ENCODE measurements at regions of chr4 and their contacts with region 1.

Region 1: GRCh38 chr4:73729534-73730165 is 10.7 kb upstream of the CXCL8 start:
- DNase-seq: peak; percentile 16 to 51
- H3K4me3 ChIP-seq: no peak overlapping the region
- H3K27ac ChIP-seq: no peak overlapping the region
- H3K4me1 ChIP-seq: peaks cover 24% of the 10 kb centered on the region
- H3K27me3 ChIP-seq: no peaks in the 10 kb centered on the region
- CTCF ChIP-seq: peak; percentile 72

Region 2: GRCh38 chr4:73662709-73663546 is 66.7 kb before region 1 on chr4:
- CTCF ChIA-PET with region 1: no interaction called
- POLR2A ChIA-PET with region 1: no interaction called
- intact Hi-C with region 1: loop called (anchors 2 kb)
- DNase-seq: no peak
- H3K4me3 ChIP-seq: no peak overlapping the region
- H3K27ac ChIP-seq: no peak overlapping the region
- H3K4me1 ChIP-seq: no peaks in the 10 kb centered on the region
- H3K27me3 ChIP-seq: no peaks in the 10 kb centered on the region
- CTCF ChIP-seq: peak; percentile 72

Region 3: DNA sequence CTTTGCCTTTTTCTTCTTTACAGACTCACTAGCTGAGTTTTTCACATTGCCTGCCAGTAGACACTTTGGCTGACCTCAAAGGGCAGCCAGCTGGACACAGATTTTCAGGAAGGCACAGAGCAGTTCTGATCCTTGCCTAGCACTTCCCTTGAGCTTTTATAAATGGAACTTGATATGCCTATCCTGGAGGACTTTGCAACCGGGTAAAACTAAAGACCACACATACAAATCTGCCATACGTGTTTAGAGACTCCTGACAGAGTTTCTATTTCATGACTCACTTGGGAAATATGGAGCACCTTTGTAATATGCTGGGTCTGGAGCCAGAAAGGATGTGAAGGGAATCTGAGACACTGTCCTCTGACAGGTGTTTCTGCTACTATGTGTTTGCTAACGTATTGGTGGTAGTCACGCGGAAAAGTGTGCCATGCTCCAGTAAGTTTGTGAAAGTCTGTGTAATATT is 52.8 kb before region 1 on chr4:
- CTCF ChIA-PET with region 1: no interaction called
- POLR2A ChIA-PET with region 1: no interaction called
- intact Hi-C with region 1: loop called (anchors 1 kb)
- DNase-seq: peak; percentile 38 to 95
- H3K4me3 ChIP-seq: no peak overlapping the region
- H3K27ac ChIP-seq: peak overlapping the region; percentile 94
- H3K4me1 ChIP-seq: peaks cover 24% of the 10 kb centered on the region
- H3K27me3 ChIP-seq: no peaks in the 10 kb centered on the region
- CTCF ChIP-seq: no peak

Region 4: DNA sequence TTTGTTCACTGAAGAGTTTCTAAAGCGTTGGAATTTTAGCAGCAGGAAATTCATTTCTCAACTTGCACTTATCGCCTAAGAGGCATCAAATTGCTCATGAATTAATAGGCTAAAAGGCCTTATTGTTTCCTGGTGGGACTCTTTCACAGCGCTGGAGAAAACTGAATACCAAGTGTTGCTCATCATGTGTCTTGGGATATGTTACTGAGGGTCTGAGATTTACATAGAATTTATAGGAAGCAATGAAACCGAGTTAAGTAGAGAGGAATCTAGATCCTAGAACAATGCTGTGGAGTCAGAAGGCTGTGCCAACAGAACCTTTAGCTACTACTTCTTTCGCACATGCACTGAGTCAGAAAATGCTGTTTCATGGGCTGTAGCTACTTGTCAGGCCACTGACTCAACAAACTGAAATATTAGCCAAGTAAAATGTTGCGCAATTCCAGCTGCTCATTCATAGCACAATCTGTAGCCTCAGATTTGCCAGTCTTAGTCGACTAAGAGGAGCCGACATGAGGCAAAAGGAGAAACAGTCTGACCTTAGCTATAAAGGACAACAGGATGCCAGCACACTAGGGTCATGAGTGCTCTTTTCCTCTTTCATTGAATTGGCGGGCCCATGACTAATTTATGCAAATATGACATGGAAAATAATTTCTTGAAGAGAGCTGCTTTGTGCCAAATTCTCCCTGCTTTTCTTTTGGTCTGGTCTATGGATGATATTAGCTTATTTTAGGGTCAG is 25.2 kb before region 1 on chr4:
- CTCF ChIA-PET with region 1: no interaction called
- POLR2A ChIA-PET with region 1: no interaction called
- intact Hi-C with region 1: loop called (anchors 1 kb)
- DNase-seq: peak; percentile 33 to 87
- H3K4me3 ChIP-seq: peak overlapping the region; percentile 13; the same call in 1 of the 2 replicates
- H3K27ac ChIP-seq: peak overlapping the region; percentile 99
- H3K4me1 ChIP-seq: peaks cover 52% of the 10 kb centered on the region
- H3K27me3 ChIP-seq: no peaks in the 10 kb centered on the region
- CTCF ChIP-seq: no peak

Region 5: DNA sequence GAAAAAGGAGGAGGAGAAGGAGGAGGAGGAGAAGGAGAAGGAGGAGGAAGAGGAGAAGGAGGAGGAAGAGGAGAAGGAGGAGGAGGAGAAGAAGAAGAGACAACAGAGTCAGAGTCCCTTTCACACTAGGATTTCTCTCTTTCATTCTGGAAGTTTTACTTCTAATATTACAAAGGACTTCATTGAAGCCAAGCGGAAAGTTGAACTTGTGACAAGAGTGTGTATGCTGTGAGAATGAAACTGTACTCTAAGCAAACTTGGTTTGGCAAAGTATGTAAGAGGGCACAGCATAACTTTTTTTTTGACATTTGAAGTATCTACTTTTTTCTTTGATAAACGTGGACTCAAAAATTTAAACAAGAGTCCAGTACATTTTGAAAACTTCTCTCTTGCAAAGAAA is 58.8 kb after region 1 on chr4:
- CTCF ChIA-PET with region 1: no interaction called
- POLR2A ChIA-PET with region 1: no interaction called
- intact Hi-C with region 1: no loop called
- DNase-seq: no peak
- H3K4me3 ChIP-seq: no peak overlapping the region
- H3K27ac ChIP-seq: no peak overlapping the region
- H3K4me1 ChIP-seq: no peaks in the 10 kb centered on the region
- H3K27me3 ChIP-seq: no peaks in the 10 kb centered on the region
- CTCF ChIP-seq: no peak

Region 6: GRCh38 chr4:73864365-73864764 is 134.7 kb after region 1 on chr4:
- CTCF ChIA-PET with region 1: no interaction called
- POLR2A ChIA-PET with region 1: no interaction called
- intact Hi-C with region 1: loop called (anchors 5 kb)
- DNase-seq: peak in 1 of 2 experiments; percentile 8
- H3K4me3 ChIP-seq: no peak overlapping the region
- H3K27ac ChIP-seq: no peak overlapping the region
- H3K4me1 ChIP-seq: no peaks in the 10 kb centered on the region
- H3K27me3 ChIP-seq: no peaks in the 10 kb centered on the region
- CTCF ChIP-seq: peak; percentile 57; the same call in 1 of the 2 replicates

Region 7: DNA sequence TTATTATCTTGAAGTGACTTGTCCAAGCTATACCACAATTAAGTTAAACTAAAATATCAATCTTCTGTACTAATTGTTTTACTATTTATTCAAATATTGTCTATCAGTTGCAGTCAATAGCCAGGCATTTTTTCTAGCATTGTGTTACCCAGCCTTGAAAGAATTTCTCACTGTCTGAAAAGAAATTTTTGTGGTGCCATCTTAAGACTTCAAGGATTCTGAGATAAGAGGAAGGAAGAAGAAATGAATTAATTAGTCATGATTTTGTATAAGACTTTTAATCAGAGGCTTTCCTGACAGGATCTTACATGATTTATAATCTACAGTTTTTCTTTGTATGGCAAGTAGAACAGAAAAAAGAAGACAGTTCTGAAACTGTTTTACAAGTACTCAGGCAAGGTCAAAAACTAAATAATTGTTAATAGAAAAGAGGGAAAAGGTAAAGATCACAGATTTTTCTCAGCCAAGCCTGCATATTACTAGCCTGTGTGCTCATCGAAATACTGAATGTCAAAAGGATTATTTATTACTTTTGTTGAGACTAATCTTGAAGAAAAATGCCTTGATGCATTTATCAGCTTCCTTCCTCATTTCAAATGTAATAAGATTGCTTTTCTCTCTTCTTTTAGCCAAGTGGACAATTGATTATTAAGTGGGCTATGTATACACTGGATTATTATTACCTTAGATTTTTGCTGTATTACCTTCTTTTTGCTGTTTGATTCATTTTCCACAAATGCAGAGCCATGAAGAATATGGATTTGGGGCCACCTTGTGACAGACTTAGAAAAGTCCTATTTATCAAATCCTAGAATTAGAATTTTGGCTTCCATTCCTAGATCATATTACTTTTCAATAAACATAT is 193.3 kb after region 1 on chr4:
- CTCF ChIA-PET with region 1: no interaction called
- POLR2A ChIA-PET with region 1: no interaction called
- intact Hi-C with region 1: loop called (anchors 10 kb)
- DNase-seq: no peak
- H3K4me3 ChIP-seq: no peak overlapping the region
- H3K27ac ChIP-seq: no peak overlapping the region
- H3K4me1 ChIP-seq: 0 out of 2 replicates have a peak, but pooled peaks cover under 1% of the 10 kb centered on the region
- H3K27me3 ChIP-seq: no peaks in the 10 kb centered on the region
- CTCF ChIP-seq: peak; percentile 61

Region 8: DNA sequence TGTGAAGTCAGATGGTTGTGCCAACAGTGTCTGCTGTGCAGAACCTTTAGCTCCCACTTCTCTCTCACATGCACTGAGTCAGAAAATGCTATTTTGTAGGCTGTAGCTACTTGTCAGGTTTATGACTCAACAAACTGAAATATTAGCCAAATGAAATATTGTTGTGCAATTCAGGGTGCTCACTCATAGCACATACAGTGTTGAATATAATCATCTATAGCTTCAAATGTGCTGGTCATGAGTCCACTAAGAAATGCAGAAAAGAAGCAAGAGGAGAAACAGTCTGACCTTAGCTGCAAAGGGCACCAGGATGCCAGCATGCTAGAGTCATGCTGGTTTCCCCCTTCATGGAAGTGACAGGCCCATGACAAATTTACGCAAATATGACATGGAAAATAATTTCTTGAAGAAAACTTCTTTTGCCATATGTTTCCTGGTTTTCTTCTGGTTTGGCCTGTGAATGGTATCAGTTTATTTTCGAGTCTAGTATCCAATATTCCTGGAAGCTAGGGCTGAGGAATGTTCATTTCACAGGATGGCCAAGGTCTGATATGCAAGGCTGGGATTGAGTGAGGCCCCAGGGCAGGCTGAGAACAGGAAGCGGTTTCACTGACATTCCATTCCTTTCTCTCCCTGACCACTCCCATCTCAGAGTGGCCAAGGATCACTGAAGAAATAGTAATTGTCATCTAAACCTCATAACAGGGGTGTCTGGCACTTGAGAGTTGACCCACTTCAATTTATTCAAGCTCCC is 379.6 kb after region 1 on chr4:
- CTCF ChIA-PET with region 1: no interaction called
- POLR2A ChIA-PET with region 1: no interaction called
- intact Hi-C with region 1: loop called (anchors 5 kb)
- DNase-seq: peak; percentile 71 to 87
- H3K4me3 ChIP-seq: no peak overlapping the region
- H3K27ac ChIP-seq: peak overlapping the region; percentile 90
- H3K4me1 ChIP-seq: peaks cover 32% of the 10 kb centered on the region
- H3K27me3 ChIP-seq: no peaks in the 10 kb centered on the region
- CTCF ChIP-seq: no peak

Measured in PC-9 (cell line).